Ascending aorta (tissue), 2 donors: ENCODE measurements at regions of chr9 and their contacts with region 1.

Region 1: GRCh38 chr9:8733131-8733954 is 933.8 kb upstream of the DMAC1 start:
- DNase-seq: no peak
- H3K4me3 ChIP-seq: peak overlapping the region; percentile 18 to 57
- H3K27ac ChIP-seq: peak overlapping the region in 1 of 2 donors; percentile 19
- H3K4me1 ChIP-seq: peaks cover 0 to 5% of the 10 kb centered on the region in 2 donors
- H3K27me3 ChIP-seq: no peaks in the 10 kb centered on the region
- CTCF ChIP-seq: no peak

Region 2: DNA sequence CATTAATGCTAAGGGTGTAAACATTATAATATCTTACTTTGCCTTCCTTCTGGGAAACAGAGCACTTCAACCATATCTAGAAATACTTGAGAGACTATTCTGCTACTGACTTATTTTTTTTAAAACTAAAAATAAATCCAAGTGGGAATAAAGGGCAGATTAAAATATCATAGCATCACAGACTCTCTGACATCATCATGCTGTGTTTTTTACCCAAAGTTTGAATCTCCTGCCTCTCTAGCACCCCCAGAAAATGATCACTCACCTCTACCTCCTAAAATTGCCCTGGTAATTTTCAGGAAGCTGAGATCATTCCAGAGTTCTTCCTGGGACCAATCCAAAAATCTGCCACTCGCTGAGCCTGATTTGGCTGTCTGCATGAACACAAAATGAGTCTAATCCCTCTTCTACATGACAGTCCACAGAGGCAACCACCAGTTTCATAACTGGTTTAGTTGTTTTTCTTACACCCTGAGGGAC is 120.0 kb before region 1 on chr9:
- intact Hi-C with region 1: loop called (anchors 10 kb)
- DNase-seq: no peak
- H3K4me3 ChIP-seq: no peak overlapping the region
- H3K27ac ChIP-seq: peak overlapping the region; percentile 35 to 52
- H3K4me1 ChIP-seq: peaks cover 0 to 4% of the 10 kb centered on the region in 2 donors
- H3K27me3 ChIP-seq: no peaks in the 10 kb centered on the region
- CTCF ChIP-seq: no peak

Region 3: DNA sequence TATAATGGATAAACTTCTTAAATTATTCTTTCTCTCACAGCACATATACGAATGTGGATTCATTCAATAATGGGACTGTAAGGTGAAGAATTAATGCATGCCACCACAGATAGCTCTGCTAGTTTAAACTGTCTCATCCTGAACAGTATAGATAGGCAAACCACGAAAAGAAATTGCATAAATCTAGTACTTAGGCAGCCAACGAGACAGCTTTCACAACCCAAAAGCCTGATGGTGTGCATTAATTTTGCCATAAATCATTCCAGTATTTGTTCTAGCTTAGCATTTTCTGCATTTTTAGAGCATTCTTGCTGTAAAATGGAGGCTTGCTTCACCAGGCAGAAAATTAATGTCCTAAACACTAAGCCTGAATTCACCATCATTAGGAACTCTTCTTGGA is 99.6 kb before region 1 on chr9:
- intact Hi-C with region 1: no loop called
- DNase-seq: no peak
- H3K4me3 ChIP-seq: no peak overlapping the region
- H3K27ac ChIP-seq: no peak overlapping the region
- H3K4me1 ChIP-seq: peaks cover 0 to 4% of the 10 kb centered on the region in 2 donors
- H3K27me3 ChIP-seq: no peaks in the 10 kb centered on the region
- CTCF ChIP-seq: no peak

Region 4: GRCh38 chr9:8694983-8695588 is 38.3 kb before region 1 on chr9:
- intact Hi-C with region 1: no loop called
- DNase-seq: no peak
- H3K4me3 ChIP-seq: no peak overlapping the region
- H3K27ac ChIP-seq: no peak overlapping the region
- H3K4me1 ChIP-seq: no peaks in the 10 kb centered on the region
- H3K27me3 ChIP-seq: no peaks in the 10 kb centered on the region
- CTCF ChIP-seq: no peak

Region 5: DNA sequence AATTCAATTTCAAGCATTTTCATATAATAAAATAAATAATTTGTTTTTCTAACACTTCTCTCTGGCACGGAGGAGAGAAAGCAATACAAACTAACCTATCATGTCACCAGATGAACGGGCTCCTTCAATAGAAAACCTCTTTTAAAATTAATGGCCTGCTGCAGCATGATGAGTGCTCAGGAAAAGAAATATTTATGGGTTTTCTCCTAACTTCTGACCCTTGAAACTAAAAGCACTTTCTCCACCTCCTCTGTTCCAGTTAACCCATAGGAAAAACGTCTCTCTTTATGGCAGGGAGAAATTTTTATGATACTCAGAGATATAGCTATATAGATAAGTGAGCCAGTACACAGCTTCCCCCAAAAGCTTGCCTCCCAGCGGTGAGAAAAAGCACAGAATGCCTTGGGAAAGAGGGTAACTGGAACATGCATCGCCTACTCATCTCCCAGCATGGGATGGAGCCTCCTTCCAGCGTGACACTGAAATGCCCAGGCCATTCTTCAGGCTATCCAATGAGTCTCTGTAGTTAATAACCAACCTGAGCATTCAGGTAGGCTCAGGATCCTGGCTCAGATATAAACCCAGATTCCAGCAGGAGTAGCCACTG is 29.2 kb after region 1 on chr9:
- intact Hi-C with region 1: no loop called
- DNase-seq: no peak
- H3K4me3 ChIP-seq: no peak overlapping the region
- H3K27ac ChIP-seq: no peak overlapping the region
- H3K4me1 ChIP-seq: peaks cover 0 to 5% of the 10 kb centered on the region in 2 donors
- H3K27me3 ChIP-seq: no peaks in the 10 kb centered on the region
- CTCF ChIP-seq: no peak

Region 6: GRCh38 chr9:8832955-8833354 is 99.6 kb after region 1 on chr9:
- intact Hi-C with region 1: no loop called
- DNase-seq: no peak
- H3K4me3 ChIP-seq: no peak overlapping the region
- H3K27ac ChIP-seq: no peak overlapping the region
- H3K4me1 ChIP-seq: peaks cover 0 to 3% of the 10 kb centered on the region in 2 donors
- H3K27me3 ChIP-seq: no peaks in the 10 kb centered on the region
- CTCF ChIP-seq: no peak